Dendritic cell treated with granulocyte-macrophage colony-stimulating factor and Interleukin-4, amounts not matched to agents 40 ng/mL and 50 ng/mL, for 4 days (primary cell): ENCODE measurements at regions of chr17 and their contacts with region 1.

Region 1: DNA sequence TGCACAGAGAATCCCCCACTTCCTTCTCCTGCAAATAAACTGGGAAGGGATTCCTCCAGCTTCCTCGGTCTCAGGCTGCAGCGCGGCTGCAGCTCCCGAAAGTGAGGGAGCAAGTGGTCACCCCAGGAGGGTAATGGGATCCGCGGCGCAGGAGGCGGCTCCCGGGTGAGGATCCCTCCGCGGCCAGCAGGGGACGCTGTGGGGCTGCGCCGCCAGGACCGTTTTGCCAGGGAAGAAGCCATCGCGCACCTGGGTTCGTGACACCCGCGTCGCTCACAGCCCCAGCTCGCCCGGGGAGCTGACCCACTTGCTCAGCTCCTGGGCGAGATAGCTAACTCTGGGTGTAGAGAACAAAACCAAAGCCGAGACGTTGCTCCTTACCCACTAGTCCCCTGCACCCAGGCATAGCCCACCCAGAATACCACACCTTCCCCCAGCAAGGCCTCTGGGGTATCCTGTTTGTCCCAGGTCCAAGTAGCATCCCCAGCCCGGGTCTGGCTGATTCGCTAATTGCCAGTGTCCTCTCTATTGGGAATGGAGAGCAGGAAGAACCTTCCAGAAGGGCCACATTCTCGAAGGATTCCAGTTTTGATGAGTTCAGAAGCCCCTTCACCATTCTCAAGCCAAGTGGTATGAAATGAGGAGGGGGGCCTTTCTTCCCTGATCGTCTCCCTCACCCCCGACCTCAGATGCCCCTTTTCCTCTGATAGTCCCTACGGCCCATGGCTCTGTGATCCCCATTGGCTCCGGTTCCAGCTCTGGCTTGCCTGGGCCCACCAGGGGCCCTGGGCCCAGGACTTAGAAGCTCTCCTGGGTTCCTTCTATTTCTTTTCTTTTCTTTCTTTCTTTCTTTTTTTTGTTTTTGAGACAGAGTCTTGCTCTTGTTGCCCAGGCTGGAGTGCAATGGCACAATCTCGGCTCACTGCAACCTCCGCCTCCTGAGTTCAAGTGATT is 14.1 kb downstream of the CYGB start:
- H3K4me3 Mint-ChIP-seq: no peak overlapping the region
- H3K27ac Mint-ChIP-seq: no peak overlapping the region
- H3K4me1 Mint-ChIP-seq: peaks cover 14% of the 10 kb centered on the region
- H3K27me3 Mint-ChIP-seq: peaks cover 58% of the 10 kb centered on the region

Region 2: DNA sequence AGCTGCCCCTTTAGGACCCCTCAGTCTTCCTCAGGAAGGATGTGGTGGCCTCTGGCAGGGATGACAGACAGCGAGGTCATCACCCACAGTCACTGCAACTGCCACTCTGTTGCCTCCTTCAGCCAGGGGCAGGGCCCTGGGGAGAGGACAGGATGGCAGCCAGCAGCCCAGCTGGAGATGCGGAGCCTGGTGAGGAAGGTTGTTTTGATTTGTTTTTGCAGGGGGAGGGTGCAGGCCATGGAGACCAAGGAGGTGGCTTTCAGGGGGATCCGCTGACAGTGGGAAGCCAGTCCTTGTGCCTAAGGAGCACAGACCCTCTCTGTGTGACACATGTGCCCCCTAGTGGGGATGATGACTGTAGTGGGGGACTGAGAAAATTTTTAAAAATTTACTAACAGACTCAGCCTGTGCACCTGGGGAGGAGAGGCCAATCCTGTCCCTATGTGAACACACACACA is 23.9 kb after region 1 on chr17:
- intact Hi-C with region 1: loop called (anchors 1 kb)
- H3K4me3 Mint-ChIP-seq: no peak overlapping the region
- H3K27ac Mint-ChIP-seq: no peak overlapping the region
- H3K4me1 Mint-ChIP-seq: peaks cover 20% of the 10 kb centered on the region
- H3K27me3 Mint-ChIP-seq: peaks cover 39% of the 10 kb centered on the region

Region 3: DNA sequence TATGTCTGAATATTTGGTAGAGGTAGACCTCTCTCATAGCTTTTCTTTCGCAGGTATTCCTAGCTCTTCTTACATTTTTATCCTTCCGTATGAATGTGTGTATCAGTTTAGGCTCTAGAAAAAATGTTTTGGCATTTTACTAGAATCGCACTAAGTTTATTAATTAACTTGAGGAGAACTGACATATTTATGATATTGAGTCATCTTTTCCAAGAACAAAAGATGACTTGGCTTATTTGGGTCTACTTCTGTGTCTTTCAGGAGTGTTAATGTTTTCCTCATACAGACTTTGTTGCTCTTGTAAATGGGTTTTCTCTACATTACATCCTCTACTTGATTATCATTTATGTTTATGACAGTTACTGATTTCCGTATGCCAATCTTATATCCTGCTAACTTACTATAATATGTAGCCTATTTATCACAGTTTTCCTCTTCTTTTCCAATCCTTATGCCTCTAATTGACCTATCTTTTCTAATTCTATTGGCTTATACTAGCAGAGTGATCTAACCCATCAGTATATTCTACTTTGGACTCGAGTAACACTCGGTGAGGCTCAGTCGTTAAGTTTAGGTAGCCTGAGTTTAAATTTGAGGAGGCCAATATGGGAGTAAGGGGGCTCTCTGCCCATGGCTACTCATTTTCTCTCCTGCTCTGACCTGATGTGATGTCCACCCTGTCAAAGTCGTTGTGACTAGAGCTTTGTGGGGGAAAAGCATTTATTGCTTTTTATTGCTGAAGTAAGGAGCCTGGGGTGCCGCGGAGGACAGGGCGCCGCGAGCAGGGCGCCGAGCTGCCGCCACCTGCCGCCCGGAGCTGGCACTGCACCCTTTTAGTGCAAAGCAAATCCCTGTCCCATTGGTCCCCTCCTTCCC is 100.1 kb after region 1 on chr17:
- intact Hi-C with region 1: loop called (anchors 1 kb)
- H3K4me3 Mint-ChIP-seq: no peak overlapping the region
- H3K27ac Mint-ChIP-seq: no peak overlapping the region
- H3K4me1 Mint-ChIP-seq: peaks cover 12% of the 10 kb centered on the region
- H3K27me3 Mint-ChIP-seq: peaks cover 23% of the 10 kb centered on the region

Region 4: DNA sequence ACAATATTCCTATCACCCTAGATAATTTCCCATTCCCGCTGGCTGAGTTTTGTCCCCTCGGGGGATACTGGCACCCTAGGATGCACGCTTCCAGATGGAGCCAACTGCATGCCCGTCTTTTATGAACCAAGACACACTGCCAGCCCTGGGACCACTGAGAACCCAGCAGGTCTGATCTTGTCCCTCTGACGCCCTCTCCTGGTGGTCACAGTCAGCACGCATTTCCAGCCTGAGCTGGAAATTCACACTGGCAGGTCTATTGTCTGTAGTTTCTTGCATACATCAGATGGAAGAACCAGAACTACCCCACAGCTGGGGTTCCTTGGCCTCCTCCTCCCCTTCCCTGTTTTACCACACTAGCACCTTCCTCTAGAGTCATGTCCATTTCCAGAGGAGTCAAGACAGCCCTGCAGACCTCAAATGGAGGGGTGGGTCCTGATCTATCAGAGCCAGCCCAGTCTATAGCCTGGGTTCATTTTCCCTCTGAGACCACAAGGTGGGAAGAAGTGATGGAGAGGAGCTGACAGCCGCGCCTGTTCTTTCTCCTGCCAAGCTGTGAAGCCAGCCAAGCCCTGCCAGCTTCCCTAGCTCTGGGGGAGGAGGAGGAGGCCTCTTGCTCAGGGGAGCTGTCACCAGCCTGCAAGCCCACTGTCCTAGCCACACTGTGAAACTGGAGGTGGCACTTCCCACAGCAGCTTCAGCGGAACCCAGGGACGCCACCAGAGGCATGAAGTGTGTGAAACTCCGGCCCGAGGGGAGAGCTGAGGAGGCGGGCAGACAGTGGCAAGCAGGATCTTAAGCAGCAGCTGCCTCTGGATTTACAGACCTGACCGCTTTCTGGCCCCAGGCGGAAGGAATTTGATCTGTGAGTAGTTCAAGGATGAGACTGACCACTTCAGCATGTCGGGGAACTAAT is 158.1 kb after region 1 on chr17:
- intact Hi-C with region 1: loop called (anchors 1 kb)
- H3K4me3 Mint-ChIP-seq: no peak overlapping the region
- H3K27ac Mint-ChIP-seq: no peak overlapping the region
- H3K4me1 Mint-ChIP-seq: no peaks in the 10 kb centered on the region
- H3K27me3 Mint-ChIP-seq: peaks cover 1% of the 10 kb centered on the region

Region 5: DNA sequence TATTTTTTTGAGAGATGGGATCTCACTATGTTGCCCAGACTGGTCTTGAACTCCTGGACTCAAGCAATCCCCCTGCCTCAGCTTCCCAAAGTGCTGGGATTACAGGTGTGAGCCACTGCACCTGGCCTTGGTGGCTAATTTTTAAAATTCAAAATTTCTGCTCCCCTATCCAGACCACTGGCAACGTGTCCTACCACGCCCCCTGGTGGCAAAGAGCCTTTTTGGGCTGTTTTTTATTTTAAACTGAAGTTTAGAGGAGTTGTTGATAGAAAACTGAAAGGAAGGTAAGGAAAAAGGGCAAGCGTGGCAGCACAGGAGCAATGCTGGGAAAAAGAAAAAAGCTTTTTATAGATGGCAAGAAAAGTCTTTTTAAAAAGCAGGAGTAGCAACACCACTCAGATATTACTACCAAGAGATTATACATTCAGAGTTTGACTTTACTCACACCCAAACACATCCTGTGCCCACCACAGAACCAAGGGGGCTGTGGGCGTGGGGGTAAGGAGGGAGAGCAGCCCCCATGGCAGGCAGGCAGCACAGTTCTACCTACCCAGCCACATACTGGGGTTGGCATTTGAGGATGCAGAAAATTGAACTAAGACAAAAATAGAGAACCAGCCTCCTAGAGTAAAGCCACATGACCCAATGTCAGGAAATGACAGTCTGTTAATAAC is 191.6 kb after region 1 on chr17:
- intact Hi-C with region 1: loop called (anchors 10 kb)
- H3K4me3 Mint-ChIP-seq: peak overlapping the region; percentile 34
- H3K27ac Mint-ChIP-seq: peak overlapping the region; percentile 76
- H3K4me1 Mint-ChIP-seq: peaks cover 52% of the 10 kb centered on the region
- H3K27me3 Mint-ChIP-seq: peaks cover 5% of the 10 kb centered on the region